ENCODE measurements at regions of chr14 and their contacts with region 1.

Region 1: GRCh38 chr14:60079724-60080123 is 12.0 kb upstream of the PCNX4 start:
- DNase-seq: no peak
- ATAC-seq: peak; percentile 47
- H3K4me3 Mint-ChIP-seq: no peak overlapping the region
- H3K27ac Mint-ChIP-seq: no peak overlapping the region
- H3K4me1 Mint-ChIP-seq: peaks cover 10% of the 10 kb centered on the region
- H3K27me3 Mint-ChIP-seq: no peaks in the 10 kb centered on the region; the same call in 1 of the 2 replicates
- CTCF ChIP-seq: no peak

Region 2: GRCh38 chr14:59897761-59898383 is 181.9 kb before region 1 on chr14:
- CTCF ChIA-PET with region 1: no interaction called
- POLR2A ChIA-PET with region 1: no interaction called
- DNase-seq: peak; percentile 39
- ATAC-seq: peak; percentile 94
- H3K4me3 Mint-ChIP-seq: no peak overlapping the region
- H3K27ac Mint-ChIP-seq: no peak overlapping the region
- H3K4me1 Mint-ChIP-seq: no peaks in the 10 kb centered on the region
- H3K27me3 Mint-ChIP-seq: 0 out of 2 replicates have a peak, but pooled peaks cover 2% of the 10 kb centered on the region
- CTCF ChIP-seq: no peak

Region 3: GRCh38 chr14:60067882-60068281 is 11.8 kb before region 1 on chr14:
- CTCF ChIA-PET with region 1: interaction called, 10 read pairs
- POLR2A ChIA-PET with region 1: no interaction called
- DNase-seq: no peak
- ATAC-seq: no peak
- H3K4me3 Mint-ChIP-seq: no peak overlapping the region
- H3K27ac Mint-ChIP-seq: no peak overlapping the region
- H3K4me1 Mint-ChIP-seq: no peaks in the 10 kb centered on the region
- H3K27me3 Mint-ChIP-seq: no peaks in the 10 kb centered on the region; the same call in 1 of the 2 replicates
- CTCF ChIP-seq: no peak

Region 4: DNA sequence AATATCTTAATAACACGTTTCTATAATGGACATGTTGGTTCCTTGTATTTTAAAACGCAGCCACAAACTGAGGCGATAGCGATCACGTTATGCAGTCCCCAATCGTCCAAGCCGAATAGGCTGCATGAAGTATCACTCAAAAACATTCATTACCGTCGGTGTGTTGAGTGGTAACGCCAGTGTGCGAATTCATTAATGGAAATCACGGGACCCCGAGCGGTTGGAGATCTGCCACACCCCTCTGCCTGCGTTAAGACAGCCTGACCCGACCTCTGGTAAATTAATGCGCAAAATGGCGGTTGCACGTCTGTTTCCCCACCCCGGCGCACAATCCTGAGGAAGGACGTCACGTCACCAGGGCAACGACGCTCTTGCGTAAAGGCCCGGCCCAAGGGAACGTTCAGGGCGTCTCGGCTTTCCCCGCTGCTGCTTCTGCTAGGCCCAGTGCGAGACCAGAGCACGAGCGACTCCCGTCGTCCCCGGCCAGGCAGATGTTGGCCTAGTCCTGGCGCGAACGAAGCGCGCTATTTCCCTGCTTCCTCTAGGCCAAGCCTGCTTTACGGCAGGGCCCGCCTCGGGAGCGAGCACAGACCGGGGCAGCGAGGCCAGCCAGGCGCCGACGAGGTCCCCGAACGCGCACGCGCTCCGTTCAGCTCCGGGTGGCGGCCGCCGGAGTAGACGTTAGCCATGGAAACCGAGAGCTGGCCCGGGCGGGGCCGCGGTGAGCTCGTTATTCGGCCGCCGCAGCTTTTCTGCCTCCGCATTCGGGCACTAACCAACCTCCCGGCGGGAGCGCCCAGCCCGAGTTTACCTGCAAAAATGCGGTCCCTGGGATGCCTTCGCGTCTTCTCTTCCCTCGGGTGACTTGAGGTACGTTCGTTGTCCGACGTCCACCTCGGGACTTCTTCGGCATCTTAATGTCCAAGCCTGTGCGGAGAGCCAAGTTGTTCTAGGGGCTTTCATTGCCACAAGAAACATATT is 12.1 kb after region 1 on chr14 and contains the start of gene PCNX4:
- CTCF ChIA-PET with region 1: interaction called, 13 read pairs
- POLR2A ChIA-PET with region 1: no interaction called
- DNase-seq: peak; percentile 93
- ATAC-seq: peak; percentile 94
- H3K4me3 Mint-ChIP-seq: peak within 1 kb of the TSS; percentile 88
- H3K27ac Mint-ChIP-seq: peak within 1 kb of the TSS; percentile 91
- H3K4me1 Mint-ChIP-seq: peaks cover 34% of the 10 kb centered on the region
- H3K27me3 Mint-ChIP-seq: no peaks in the 10 kb centered on the region; the same call in 1 of the 2 replicates
- CTCF ChIP-seq: no peak
- total RNA-seq, gene PCNX4: 31.7 to 39.9 TPM (median 37.8 TPM) in 3 replicates